ENCODE measurements at regions of chrX and their contacts with region 1.

Region 1: GRCh38 chrX:66200855-66201795 is 37.1 kb downstream of the HEPH start:
- DNase-seq: no peak
- ATAC-seq: no peak
- H3K4me3 Mint-ChIP-seq: no peak overlapping the region
- H3K27ac Mint-ChIP-seq: no peak overlapping the region
- H3K4me1 Mint-ChIP-seq: peaks cover 19% of the 10 kb centered on the region
- H3K27me3 Mint-ChIP-seq: no peaks in the 10 kb centered on the region
- CTCF ChIP-seq: peak; percentile 54

Region 2: GRCh38 chrX:65997978-65998717 is 203.0 kb before region 1 on chrX:
- CTCF ChIA-PET with region 1: no interaction called
- POLR2A ChIA-PET with region 1: no interaction called
- intact Hi-C with region 1: no loop called
- DNase-seq: no peak
- ATAC-seq: no peak
- H3K4me3 Mint-ChIP-seq: no peak overlapping the region
- H3K27ac Mint-ChIP-seq: no peak overlapping the region
- H3K4me1 Mint-ChIP-seq: peaks cover 51% of the 10 kb centered on the region
- H3K27me3 Mint-ChIP-seq: no peaks in the 10 kb centered on the region
- CTCF ChIP-seq: no peak

Region 3: GRCh38 chrX:66176134-66176533 is 25.0 kb before region 1 on chrX:
- CTCF ChIA-PET with region 1: no interaction called
- POLR2A ChIA-PET with region 1: no interaction called
- intact Hi-C with region 1: no loop called
- DNase-seq: no peak
- ATAC-seq: no peak
- H3K4me3 Mint-ChIP-seq: no peak overlapping the region
- H3K27ac Mint-ChIP-seq: no peak overlapping the region
- H3K4me1 Mint-ChIP-seq: no peaks in the 10 kb centered on the region
- H3K27me3 Mint-ChIP-seq: no peaks in the 10 kb centered on the region
- CTCF ChIP-seq: no peak

Region 4: DNA sequence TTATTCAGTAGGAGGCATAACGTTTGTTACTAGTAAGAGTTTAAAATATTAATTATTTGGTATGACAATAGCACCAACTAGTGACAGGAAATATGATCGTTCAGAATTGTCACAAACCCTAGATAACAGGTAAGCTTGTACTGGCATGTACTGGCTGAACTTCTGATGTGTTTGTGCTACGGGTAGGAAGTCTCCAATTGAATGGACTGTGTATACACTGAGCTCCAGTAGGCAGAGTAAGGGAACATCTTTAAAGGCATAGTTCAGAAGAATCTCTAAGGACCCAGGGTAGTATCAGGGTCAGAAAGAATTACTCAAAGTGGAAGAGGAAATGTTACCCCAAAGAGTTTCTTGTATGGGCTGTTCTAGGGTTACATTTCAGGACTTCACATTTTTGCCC is 207.4 kb after region 1 on chrX:
- CTCF ChIA-PET with region 1: interaction called, 4 read pairs
- POLR2A ChIA-PET with region 1: no interaction called
- intact Hi-C with region 1: loop called (anchors 10 kb)
- DNase-seq: no peak
- ATAC-seq: no peak
- H3K4me3 Mint-ChIP-seq: no peak overlapping the region
- H3K27ac Mint-ChIP-seq: no peak overlapping the region
- H3K4me1 Mint-ChIP-seq: no peaks in the 10 kb centered on the region
- H3K27me3 Mint-ChIP-seq: peaks cover 3% of the 10 kb centered on the region
- CTCF ChIP-seq: no peak

Region 5: GRCh38 chrX:66728818-66729271 is 527.7 kb after region 1 on chrX:
- CTCF ChIA-PET with region 1: interaction called, 10 read pairs
- POLR2A ChIA-PET with region 1: no interaction called
- intact Hi-C with region 1: no loop called
- DNase-seq: peak; percentile 59
- ATAC-seq: peak; percentile 92
- H3K4me3 Mint-ChIP-seq: peak overlapping the region; percentile 82
- H3K27ac Mint-ChIP-seq: peak overlapping the region; percentile 88
- H3K4me1 Mint-ChIP-seq: peaks cover 2% of the 10 kb centered on the region
- H3K27me3 Mint-ChIP-seq: no peaks in the 10 kb centered on the region
- CTCF ChIP-seq: peak; percentile 66

Measured in activated CD8-positive, alpha-beta T cell treated with anti-CD3 and anti-CD28 coated beads for 36 hours (primary cell).